Posterior vena cava (tissue), 2 donors: ENCODE measurements at regions of chr6 and their contacts with region 1.

Region 1: GRCh38 chr6:27772261-27773001 is 139.8 kb downstream of the OR2B2 start:
- DNase-seq: peak; percentile 96

Region 2: DNA sequence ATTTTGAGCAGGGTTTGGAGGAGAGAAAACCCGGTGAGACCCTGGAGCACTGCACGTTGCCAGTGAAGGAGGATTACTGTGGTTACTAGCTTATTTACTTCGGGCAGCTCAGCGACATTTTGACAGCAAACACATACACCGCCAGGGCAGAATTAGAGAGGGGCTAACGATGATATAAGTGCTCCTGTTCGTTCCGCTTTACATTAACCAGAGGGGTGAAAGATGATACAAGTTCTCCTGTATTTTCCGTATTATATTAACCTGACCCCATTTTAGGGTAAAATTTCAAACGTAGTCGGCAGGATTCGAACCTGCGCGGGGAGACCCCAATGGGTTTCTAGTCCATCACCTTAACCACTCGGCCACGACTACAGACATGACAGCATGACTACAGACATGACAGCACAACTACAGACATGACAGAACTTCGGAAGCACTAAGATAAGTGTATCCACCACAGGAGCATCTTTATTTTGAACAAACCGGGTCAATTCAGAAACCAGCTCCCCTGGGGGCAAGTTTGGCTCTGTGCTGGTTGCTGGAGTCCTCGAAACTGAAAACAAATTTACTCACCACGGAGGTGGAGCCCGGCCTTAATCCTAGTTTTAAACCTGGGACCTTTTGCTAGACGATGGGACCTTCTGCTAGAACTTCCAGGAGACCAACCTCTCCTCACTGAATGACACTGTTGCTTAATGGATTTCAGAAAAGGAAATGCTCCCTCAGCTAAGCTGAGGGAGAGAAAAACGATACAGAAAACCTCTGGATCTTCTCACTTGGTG is 219.1 kb before region 1 on chr6:
- intact Hi-C with region 1: no loop called
- DNase-seq: no peak

Region 3: DNA sequence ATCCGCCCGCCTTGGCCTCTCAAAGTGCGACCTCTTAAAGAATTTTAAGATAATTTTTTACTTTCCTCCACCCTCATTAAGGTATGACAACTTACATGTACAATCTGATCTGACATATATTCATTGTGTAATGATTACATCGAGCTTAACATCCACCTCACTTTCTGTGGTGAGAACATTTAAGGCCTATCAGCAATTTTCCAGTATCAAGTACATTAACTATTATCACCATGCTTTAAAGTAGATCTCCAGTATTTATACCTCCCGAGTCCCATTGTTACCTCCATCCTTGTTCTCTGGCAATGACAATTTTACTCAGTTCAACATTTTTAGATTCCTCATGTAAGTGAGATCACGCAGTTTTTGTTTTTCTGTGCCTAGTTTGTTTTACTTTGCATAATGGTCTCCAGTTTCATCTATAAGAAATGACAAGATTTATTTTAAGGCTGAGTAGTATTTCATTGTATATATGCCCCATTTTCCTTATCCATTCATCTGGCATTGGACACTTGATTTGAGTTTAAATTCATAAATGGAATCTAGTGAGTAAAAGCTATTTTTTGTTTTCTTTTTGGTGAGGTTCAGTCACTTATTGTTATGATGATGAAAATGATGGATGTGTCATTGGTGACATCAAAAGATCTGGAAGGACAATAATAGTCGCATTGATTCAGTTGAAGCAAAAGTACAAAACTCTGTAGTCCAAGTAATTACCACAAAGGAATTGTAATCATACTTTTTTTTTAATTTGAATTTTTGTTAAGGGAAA is 52.8 kb after region 1 on chr6:
- intact Hi-C with region 1: no loop called
- DNase-seq: no peak

Region 4: DNA sequence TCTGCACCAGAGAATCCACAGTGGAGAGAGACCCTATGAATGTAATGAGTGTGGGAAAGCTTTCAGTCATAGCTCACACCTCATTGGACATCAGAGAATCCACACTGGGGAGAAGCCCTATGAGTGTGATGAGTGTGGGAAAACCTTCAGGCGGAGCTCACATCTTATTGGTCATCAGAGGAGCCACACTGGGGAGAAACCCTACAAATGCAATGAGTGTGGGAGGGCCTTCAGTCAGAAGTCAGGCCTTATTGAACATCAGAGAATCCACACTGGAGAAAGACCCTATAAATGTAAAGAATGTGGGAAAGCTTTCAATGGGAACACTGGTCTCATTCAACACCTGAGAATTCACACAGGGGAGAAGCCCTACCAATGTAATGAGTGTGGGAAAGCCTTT is 381.1 kb after region 1 on chr6:
- intact Hi-C with region 1: loop called in 1 of 2 experiments (anchors 10 kb)
- DNase-seq: no peak